GM10248 (cell line): ENCODE measurements at regions of chr15 and their contacts with region 1.

Region 1: GRCh38 chr15:38699633-38700230 is 135.1 kb upstream of the RASGRP1 start:
- DNase-seq: peak; percentile 60
- CTCF ChIP-seq: peak; percentile 93

Region 2: GRCh38 chr15:37995461-37996347 is 704.0 kb before region 1 on chr15:
- CTCF ChIA-PET with region 1: interaction called, 20 read pairs
- POLR2A ChIA-PET with region 1: no interaction called
- DNase-seq: no peak
- CTCF ChIP-seq: peak; percentile 60

Region 3: GRCh38 chr15:38474155-38474757 is 225.5 kb before region 1 on chr15:
- CTCF ChIA-PET with region 1: interaction called, 38 read pairs
- POLR2A ChIA-PET with region 1: no interaction called
- DNase-seq: peak; percentile 49
- CTCF ChIP-seq: peak; percentile 54

Region 4: DNA sequence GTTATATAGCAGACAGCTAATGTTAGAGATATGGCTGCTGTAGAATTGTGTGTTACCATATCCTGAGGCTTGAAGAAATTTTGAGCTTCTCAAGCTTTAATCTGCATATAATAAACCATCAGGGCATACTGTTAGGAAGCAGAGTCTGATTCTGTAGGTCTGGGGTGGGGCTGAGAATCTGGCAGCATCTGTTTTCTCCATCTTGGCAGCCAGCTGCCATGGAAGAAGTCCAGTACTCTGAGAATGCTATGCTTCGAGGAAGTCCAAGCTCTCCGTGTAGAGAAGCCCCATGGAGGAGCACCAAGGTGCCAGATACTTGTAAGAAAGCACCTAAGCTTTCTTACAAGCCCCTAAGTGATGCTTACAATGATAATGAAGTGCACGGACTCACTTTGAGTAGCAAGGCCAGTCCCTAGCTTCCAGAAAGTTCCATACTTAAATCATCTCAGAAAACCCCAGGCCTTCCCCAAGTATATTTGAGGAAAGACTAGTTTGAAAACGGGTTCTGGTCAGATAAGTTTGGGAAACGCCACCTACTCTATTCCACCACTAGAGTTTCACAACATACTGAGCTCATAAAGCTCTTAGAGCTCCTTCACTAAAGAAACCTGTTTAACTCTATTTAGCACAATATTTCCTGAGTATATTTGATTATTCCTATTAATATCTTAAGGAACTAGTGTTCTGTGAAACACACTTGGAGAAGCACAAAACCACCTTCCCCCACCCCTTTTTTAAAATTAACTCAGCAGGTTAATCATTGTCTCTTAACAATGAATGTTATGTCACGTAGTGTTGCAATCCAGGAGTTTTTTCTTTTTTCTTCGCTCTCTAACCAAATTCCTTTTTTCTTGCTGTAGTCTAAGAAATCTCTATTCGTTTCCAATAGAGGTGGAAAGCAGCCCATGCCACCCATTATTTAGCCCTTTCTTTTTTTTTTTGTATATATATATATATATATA is 75.2 kb before region 1 on chr15:
- CTCF ChIA-PET with region 1: interaction called, 18 read pairs
- POLR2A ChIA-PET with region 1: no interaction called
- DNase-seq: no peak
- CTCF ChIP-seq: no peak

Region 5: GRCh38 chr15:38714309-38715072 is 14.8 kb after region 1 on chr15:
- CTCF ChIA-PET with region 1: interaction called, 26 read pairs
- POLR2A ChIA-PET with region 1: no interaction called
- DNase-seq: no peak
- CTCF ChIP-seq: no peak

Region 6: DNA sequence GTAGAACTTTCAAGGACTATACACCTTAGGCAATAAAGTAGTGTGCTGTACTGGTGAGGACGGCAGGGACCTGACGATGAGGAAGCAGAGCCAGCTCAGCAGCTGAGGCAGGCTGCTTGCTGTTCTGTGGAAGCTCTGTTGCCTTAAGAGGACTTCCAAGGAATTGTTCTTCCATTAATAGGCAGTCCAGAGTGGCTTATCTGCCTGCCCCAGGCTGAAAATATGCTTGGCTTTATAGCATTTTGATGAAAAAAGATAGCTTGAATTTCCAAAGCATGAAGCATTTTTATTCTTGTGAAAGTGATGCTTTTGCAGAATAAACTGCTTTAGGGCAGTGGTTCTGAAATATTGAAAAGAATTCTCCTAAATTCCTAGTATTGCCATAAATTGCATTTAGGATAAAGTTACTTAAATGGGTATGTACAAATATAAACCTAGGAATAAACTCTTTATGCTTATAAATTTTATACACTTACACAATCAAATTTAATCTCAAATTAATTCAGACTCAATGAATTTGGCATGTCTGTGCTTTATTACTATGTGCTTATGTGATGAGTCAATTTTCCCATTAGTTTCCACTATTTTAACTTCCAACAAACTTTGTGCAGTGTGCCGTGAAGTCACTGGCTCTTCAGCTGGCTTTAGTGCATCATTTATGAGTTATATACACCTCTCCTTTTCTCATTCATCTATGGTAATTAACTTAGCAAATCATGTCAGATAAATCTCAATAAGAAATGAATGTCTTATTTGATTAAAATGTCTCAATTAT is 95.9 kb after region 1 on chr15:
- CTCF ChIA-PET with region 1: no interaction called
- POLR2A ChIA-PET with region 1: no interaction called
- DNase-seq: no peak
- CTCF ChIP-seq: no peak